ENCODE measurements at regions of chr15 and their contacts with region 1.

Region 1: DNA sequence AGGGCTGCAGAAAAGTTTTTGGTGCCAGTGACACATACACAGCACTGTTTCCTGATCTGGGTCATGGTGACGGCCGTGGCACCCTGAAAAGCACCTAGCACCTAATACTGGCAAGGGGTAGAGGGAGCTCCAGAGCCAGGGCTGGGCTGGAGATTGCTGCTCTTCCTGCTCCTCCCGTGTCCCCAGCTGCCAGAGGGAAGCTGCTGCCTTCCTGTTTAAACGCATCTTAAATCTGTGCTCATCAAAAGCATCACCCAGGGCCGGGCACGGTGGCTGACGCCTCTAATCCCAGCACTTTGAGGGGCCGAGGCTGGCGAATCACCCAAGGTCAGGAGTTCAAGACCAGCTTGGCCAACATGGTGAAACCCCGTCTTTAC is 156.7 kb upstream of the MEF2A start:
- DNase-seq: no peak
- H3K4me3 ChIP-seq: no peak overlapping the region
- H3K27me3 ChIP-seq: no peaks in the 10 kb centered on the region
- CTCF ChIP-seq: peak; percentile 66

Region 2: DNA sequence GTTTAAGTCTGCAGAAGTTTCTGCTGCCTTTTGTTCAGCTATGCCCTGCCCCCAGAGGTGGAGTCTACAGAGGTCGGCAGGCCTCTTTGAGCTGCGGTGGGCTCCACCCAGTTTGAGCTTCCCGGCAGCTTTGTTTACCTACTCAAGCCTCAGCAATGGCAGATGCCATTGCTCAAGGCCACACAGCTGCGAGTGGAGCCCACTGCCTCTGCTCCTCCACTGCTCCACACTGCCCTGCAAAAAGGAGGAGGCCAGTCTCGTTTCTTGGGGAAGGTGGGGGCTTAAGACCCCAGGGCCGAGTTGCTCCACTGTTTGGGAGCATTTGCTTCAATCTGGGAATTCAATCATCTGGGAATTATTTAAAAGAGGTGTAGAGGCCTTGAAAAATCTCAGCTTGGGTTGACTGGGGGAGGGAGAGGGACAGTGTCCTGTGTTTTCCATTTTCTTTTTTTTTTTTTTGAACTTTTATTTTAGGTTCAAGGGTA is 12.1 kb after region 1 on chr15:
- CTCF ChIA-PET with region 1: interaction called, 14 read pairs
- POLR2A ChIA-PET with region 1: no interaction called
- DNase-seq: no peak
- H3K4me3 ChIP-seq: no peak overlapping the region
- H3K27me3 ChIP-seq: no peaks in the 10 kb centered on the region
- CTCF ChIP-seq: no peak

Region 3: GRCh38 chr15:99452774-99453636 is 43.9 kb after region 1 on chr15:
- CTCF ChIA-PET with region 1: no interaction called
- POLR2A ChIA-PET with region 1: no interaction called
- DNase-seq: no peak
- H3K4me3 ChIP-seq: no peak overlapping the region
- H3K27me3 ChIP-seq: no peaks in the 10 kb centered on the region
- CTCF ChIP-seq: no peak

Measured in BJ (cell line).